Panc1 (cell line): ENCODE measurements at regions of chr7 and their contacts with region 1.

Region 1: DNA sequence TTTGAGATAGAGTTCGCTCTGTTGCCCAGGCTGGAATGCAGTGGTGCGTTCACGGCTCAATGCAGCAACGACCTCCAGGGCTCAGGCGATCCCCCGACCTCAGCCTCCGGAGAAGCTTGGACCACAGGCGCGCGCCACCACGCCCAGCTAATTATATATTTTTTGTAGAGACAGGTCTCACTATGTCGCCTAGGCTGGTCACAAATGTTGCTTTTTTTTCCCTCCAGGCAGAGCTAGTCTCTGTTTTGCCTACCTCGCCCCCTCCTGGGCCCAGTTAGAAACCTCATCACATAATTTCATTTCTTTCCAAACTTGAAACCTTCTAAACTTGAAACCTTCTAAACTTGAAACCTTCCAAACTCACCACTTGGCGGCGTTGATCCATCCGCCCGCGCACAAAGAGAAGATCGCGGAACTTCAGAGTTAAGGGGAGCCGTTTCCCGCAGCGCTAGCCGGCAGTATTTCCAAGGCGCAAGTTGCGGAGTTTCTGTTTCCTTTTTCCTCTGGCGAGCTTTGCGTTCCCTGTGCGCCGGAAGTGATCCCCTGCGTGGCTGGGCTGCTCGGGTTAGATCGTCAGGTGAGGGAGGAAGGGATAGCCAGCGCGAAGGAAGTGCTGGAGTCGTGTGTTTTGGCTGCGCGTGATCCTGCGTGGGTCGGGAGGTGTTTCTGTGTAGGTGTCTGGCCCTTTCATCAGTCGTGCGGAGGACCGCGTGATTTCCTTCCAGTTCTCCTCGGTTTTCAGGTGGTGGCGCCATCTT is at the start of gene SSBP1:
- DNase-seq: peak; percentile 98
- ATAC-seq: peak; percentile 98
- H3K4me3 ChIP-seq: peak within 1 kb of the TSS; percentile 88 to 100
- H3K27ac ChIP-seq: peak within 1 kb of the TSS; percentile 98
- H3K4me1 ChIP-seq: peaks cover 12% of the 10 kb centered on the region; the same call in 1 of the 2 replicates
- H3K27me3 ChIP-seq: no peaks in the 10 kb centered on the region
- CTCF ChIP-seq: peak; percentile 95
- total RNA-seq, gene SSBP1: 174 TPM

Region 2: DNA sequence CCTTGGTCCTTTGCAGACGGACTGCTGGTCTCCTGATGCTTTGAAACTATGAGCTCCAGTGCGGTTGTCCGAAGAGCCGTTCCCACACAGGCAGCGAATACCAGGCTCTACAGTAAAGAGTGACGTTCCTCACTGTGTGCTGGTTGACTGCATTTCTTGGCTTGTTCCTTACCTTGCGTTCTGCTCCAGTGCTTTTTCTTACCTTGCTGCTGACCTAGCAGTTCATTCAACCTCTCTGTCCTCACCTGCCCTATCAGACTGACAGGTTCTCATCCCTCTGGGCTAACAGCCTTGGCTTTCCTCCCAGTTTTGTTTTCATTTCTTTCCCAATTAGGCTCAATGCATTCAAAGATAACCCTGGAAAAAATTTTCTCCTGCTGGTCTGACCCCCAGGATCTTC is 449.4 kb before region 1 on chr7:
- CTCF ChIA-PET with region 1: no interaction called
- POLR2A ChIA-PET with region 1: interaction called, 11 read pairs
- in situ Hi-C with region 1: no loop called
- intact Hi-C with region 1: no loop called
- DNase-seq: no peak
- ATAC-seq: no peak
- H3K4me3 ChIP-seq: no peak overlapping the region
- H3K27ac ChIP-seq: no peak overlapping the region
- H3K4me1 ChIP-seq: no peaks in the 10 kb centered on the region
- H3K27me3 ChIP-seq: no peaks in the 10 kb centered on the region; the same call in 1 of the 2 replicates
- CTCF ChIP-seq: no peak

Region 3: DNA sequence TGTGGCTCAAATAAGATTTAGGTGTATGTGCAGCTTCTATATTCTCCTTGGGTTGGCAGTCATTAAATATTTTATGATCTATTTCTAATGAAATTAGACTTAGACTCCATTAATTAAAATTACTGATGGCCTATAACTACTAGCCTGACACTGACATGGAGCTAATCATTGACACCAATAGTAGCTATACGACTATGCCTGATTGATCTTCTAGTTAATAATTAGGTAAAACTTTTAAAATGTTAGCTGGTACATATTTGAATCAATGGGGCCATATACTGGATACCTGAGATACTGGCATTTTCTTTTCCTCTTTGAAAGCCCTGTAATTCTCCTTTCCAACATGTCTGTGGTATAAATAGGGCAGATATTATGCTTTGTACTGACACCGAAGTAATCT is 15.5 kb before region 1 on chr7:
- CTCF ChIA-PET with region 1: no interaction called
- POLR2A ChIA-PET with region 1: no interaction called
- in situ Hi-C with region 1: no loop called
- intact Hi-C with region 1: no loop called
- DNase-seq: no peak
- ATAC-seq: no peak
- H3K4me3 ChIP-seq: no peak overlapping the region
- H3K27ac ChIP-seq: no peak overlapping the region
- H3K4me1 ChIP-seq: no peaks in the 10 kb centered on the region
- H3K27me3 ChIP-seq: peaks cover 13% of the 10 kb centered on the region; the same call in 1 of the 2 replicates
- CTCF ChIP-seq: no peak

Region 4: GRCh38 chr7:141763797-141764196 is 25.8 kb after region 1 on chr7 and contains the start of gene TAS2R3:
- CTCF ChIA-PET with region 1: no interaction called
- POLR2A ChIA-PET with region 1: no interaction called
- in situ Hi-C with region 1: no loop called
- intact Hi-C with region 1: no loop called
- DNase-seq: no peak
- ATAC-seq: no peak
- H3K4me3 ChIP-seq: no peak within 1 kb of the TSS
- H3K27ac ChIP-seq: no peak within 1 kb of the TSS
- H3K4me1 ChIP-seq: no peaks in the 10 kb centered on the region
- H3K27me3 ChIP-seq: no peaks in the 10 kb centered on the region
- CTCF ChIP-seq: no peak
- total RNA-seq, gene TAS2R3: 0.49 TPM